IMR-90 (cell line): ENCODE measurements at regions of chr9 and their contacts with region 1.

Region 1: GRCh38 chr9:4228606-4229005 is 71.3 kb downstream of the GLIS3 start:
- DNase-seq: peak; percentile 59
- ATAC-seq: peak; percentile 76
- H3K4me3 ChIP-seq: no peak overlapping the region
- H3K27ac ChIP-seq: no peak overlapping the region
- H3K4me1 ChIP-seq: peaks cover 6% of the 10 kb centered on the region
- H3K27me3 ChIP-seq: no peaks in the 10 kb centered on the region
- CTCF ChIP-seq: peak; percentile 63
- POLR2A ChIP-seq: no peak
- RAD21 ChIP-seq: peak; percentile 75

Region 2: GRCh38 chr9:3525836-3526164 is 702.8 kb before region 1 on chr9 and contains the start of gene RFX3:
- CTCF ChIA-PET with region 1: no interaction called
- POLR2A ChIA-PET with region 1: no interaction called
- dilution Hi-C with region 1: no loop called
- in situ Hi-C with region 1: no loop called
- intact Hi-C with region 1: loop called (anchors 5 kb)
- DNase-seq: peak; percentile 97
- ATAC-seq: peak; percentile 86
- H3K4me3 ChIP-seq: peak within 1 kb of the TSS; percentile 97
- H3K27ac ChIP-seq: peak within 1 kb of the TSS; percentile 99
- H3K4me1 ChIP-seq: no peaks in the 10 kb centered on the region; the same call in 1 of the 2 replicates
- H3K27me3 ChIP-seq: no peaks in the 10 kb centered on the region
- CTCF ChIP-seq: peak; percentile 15; the same call in 1 of the 2 replicates
- POLR2A ChIP-seq: no peak
- RAD21 ChIP-seq: no peak
- total RNA-seq, gene RFX3: 2.5 and 2.7 TPM in 2 replicates

Region 3: GRCh38 chr9:3906432-3907213 is 322.0 kb before region 1 on chr9:
- CTCF ChIA-PET with region 1: no interaction called
- POLR2A ChIA-PET with region 1: no interaction called
- dilution Hi-C with region 1: no loop called
- in situ Hi-C with region 1: no loop called
- intact Hi-C with region 1: loop called (anchors 10 kb)
- DNase-seq: peak; percentile 95
- ATAC-seq: peak; percentile 99
- H3K4me3 ChIP-seq: no peak overlapping the region
- H3K27ac ChIP-seq: peak overlapping the region; percentile 58
- H3K4me1 ChIP-seq: peaks cover 8% of the 10 kb centered on the region
- H3K27me3 ChIP-seq: no peaks in the 10 kb centered on the region
- CTCF ChIP-seq: no peak
- POLR2A ChIP-seq: no peak
- RAD21 ChIP-seq: no peak; the same call in 1 of the 2 replicates

Region 4: DNA sequence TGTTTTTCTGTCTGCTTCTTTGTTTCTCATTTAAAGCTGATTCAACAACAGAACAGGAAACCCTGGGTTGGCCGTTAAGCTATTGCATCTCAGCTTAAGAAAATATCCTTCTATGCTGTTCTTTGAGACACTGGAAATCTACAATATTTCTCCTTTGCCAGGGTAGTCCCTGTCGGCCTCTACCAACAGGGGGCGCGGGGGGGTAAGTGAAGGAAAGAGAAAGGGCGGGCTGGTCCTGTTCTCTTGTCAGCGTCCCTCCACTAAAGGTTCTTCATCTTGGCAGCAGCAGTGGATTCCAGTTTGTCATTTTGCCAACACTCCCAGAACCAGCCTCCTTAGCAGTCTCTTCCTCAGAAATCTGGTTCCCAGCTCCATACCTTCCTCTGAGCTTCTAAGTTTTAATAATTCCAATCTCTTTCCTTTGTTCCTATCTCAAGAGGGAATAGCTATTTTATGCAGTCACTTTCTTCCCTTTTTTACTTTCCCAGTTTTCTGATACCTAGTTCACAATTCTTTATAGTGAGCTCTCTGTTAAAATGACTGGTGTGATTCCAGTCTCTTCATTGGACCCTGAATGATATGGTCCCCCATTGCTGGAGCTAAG is 151.0 kb before region 1 on chr9:
- CTCF ChIA-PET with region 1: interaction called, 10 read pairs
- POLR2A ChIA-PET with region 1: no interaction called
- dilution Hi-C with region 1: no loop called
- in situ Hi-C with region 1: no loop called
- intact Hi-C with region 1: loop called (anchors 2 kb)
- DNase-seq: peak; percentile 70
- ATAC-seq: peak; percentile 73
- H3K4me3 ChIP-seq: no peak overlapping the region
- H3K27ac ChIP-seq: no peak overlapping the region
- H3K4me1 ChIP-seq: peaks cover 4% of the 10 kb centered on the region
- H3K27me3 ChIP-seq: no peaks in the 10 kb centered on the region
- CTCF ChIP-seq: peak; percentile 80
- POLR2A ChIP-seq: no peak
- RAD21 ChIP-seq: peak; percentile 72

Region 5: GRCh38 chr9:4137234-4137633 is 91.4 kb before region 1 on chr9:
- CTCF ChIA-PET with region 1: interaction called, 3 read pairs
- POLR2A ChIA-PET with region 1: no interaction called
- dilution Hi-C with region 1: no loop called
- in situ Hi-C with region 1: no loop called
- intact Hi-C with region 1: loop called (anchors 1 kb)
- DNase-seq: peak; percentile 97
- ATAC-seq: peak; percentile 75
- H3K4me3 ChIP-seq: no peak overlapping the region
- H3K27ac ChIP-seq: peak overlapping the region; percentile 75
- H3K4me1 ChIP-seq: peaks cover 23% of the 10 kb centered on the region
- H3K27me3 ChIP-seq: no peaks in the 10 kb centered on the region
- CTCF ChIP-seq: no peak
- POLR2A ChIP-seq: no peak
- RAD21 ChIP-seq: 0 out of 2 replicates have a peak, but pooled peaks have one; percentile 10

Region 6: DNA sequence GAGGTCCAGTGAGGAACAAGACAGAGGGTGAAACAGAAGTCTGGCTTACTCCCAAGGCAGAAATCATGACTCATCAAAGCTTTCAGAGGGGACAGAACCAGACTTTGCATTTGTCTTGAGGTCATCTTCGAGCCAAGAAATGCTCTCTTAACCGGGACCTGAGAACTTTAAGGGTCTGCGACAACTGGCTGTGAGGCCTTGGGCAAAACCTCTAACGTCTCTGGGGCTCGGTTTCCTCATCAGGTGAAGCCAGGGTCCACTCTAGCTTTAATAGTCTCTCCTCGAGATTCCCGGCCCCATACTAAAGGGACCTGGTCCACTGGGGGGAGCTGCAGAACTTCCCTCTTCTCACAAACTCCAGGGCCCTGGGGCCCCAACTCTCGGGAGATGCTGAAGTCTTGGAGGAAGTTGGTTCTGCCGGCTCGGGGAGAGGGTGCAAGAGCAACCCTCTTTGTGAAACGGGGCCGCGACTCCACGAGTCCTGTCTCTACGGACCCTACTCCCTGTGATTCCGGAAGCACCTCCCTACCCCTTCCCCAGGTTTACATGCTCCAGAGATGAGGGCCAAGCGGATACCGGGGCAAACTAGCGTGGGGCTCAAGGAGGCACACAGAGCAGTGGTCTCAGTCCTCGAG is 68.7 kb after region 1 on chr9:
- CTCF ChIA-PET with region 1: interaction called, 6 read pairs
- POLR2A ChIA-PET with region 1: no interaction called
- dilution Hi-C with region 1: no loop called
- in situ Hi-C with region 1: no loop called
- intact Hi-C with region 1: loop called (anchors 5 kb)
- DNase-seq: peak; percentile 87
- ATAC-seq: peak; percentile 22
- H3K4me3 ChIP-seq: peak overlapping the region; percentile 74
- H3K27ac ChIP-seq: peak overlapping the region; percentile 99
- H3K4me1 ChIP-seq: peaks cover 15% of the 10 kb centered on the region
- H3K27me3 ChIP-seq: no peaks in the 10 kb centered on the region
- CTCF ChIP-seq: peak; percentile 55
- POLR2A ChIP-seq: no peak; the same call in 1 of the 2 replicates
- RAD21 ChIP-seq: peak; percentile 37; the same call in 1 of the 2 replicates